Heart right ventricle (tissue), 16 donors: ENCODE measurements at regions of chr10 and their contacts with region 1.

Region 1: GRCh38 chr10:30186371-30186875 is 127.0 kb upstream of the JCAD start:
- DNase-seq: peak in 1 of 2 donors; percentile 24
- ATAC-seq: peak; percentile 19 to 70 (median 52)
- H3K4me3 ChIP-seq: peak overlapping the region in 5 of 10 donors; percentile 14 to 42 (median 31)
- H3K27ac ChIP-seq: peak overlapping the region; percentile 53 to 94 (median 83)
- H3K4me1 ChIP-seq: peaks cover 4 to 57% (median 21%) of the 10 kb centered on the region in 9 donors
- H3K27me3 ChIP-seq: no peaks in the 10 kb centered on the region
- CTCF ChIP-seq: peak in 7 of 9 donors; percentile 9 to 56 (median 29)

Region 2: DNA sequence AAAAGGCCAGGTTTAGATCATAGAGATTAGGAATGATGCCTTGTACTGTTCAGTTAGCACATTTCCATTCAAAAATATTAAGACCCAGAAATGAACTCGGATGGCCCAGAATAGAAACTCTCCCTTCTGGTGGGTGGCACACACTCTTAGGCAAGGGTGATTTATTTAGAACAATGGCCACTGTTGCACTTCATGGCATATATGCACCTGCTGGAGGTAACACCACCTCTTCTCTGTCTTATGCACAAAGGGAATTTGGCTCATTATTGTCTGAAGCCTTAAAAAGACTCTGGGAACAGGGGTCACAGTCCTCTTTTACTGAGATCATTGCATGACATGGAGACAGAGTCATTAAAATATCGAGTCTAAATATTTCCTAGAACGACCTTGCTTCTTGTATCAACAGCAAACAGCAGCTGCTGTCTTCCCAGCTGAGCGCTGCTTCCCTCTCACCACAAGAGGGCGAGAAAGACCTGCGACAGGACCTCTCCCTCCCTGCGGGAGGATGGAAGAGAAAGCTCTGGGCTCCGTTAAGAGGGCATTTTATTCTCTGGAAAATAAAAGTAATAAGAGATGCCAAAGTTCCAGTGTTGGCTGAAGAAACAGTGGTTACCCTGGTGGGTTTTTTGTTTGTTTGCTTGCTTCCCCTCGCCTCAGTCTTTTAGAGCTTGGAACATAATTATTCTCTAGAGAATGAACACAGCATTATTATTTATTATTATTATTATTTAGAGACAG is 1522.7 kb before region 1 on chr10:
- intact Hi-C with region 1: no loop called
- DNase-seq: peak; percentile 74 to 79
- ATAC-seq: peak; percentile 77 to 92 (median 90)
- H3K4me3 ChIP-seq: no peak overlapping the region
- H3K27ac ChIP-seq: no peak overlapping the region
- H3K4me1 ChIP-seq: peaks cover 0 to 14% (median 4%) of the 10 kb centered on the region in 9 donors
- H3K27me3 ChIP-seq: peaks cover 0 to 29% (median 4%) of the 10 kb centered on the region in 7 donors
- CTCF ChIP-seq: peak; percentile 93 to 98 (median 96)

Region 3: DNA sequence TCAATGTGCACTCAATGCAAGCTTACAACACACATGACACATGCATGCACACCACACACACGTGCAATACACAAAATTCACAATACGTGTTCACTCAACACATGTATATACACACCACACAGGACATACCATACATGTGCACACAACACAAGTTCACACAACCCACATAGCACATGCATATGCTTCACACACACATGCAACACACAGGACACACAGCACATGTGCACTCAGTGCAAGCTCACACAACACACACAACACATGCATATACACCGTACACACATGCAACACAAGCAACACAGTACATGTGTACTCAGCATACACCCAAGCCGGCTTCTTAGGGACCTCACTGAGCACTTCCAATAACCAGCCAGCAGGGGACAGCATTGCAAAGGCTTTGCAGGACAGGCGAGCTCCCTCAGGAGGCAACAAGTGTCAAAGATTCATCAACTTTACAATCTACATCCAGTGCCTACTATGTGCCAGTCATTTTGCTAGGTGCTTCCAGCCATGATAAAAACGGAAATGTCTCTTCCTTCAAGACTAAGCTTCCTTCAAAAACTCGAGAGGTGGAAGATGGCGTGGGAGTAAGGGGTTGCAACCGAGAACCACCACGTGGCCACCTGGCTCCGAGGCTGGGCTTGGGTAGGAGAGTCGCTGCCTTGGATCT is 188.1 kb before region 1 on chr10:
- intact Hi-C with region 1: loop called in 3 of 10 experiments (anchors 5 to 10 kb)
- DNase-seq: peak; percentile 62 to 80
- ATAC-seq: peak in 7 of 8 donors; percentile 45 to 70 (median 63)
- H3K4me3 ChIP-seq: no peak overlapping the region
- H3K27ac ChIP-seq: no peak overlapping the region
- H3K4me1 ChIP-seq: peaks cover 11 to 36% (median 29%) of the 10 kb centered on the region in 9 donors
- H3K27me3 ChIP-seq: peaks cover 0 to 11% (median 0%) of the 10 kb centered on the region in 7 donors
- CTCF ChIP-seq: peak; percentile 96 to 100 (median 99)

Region 4: GRCh38 chr10:30027057-30028005 is 159.1 kb before region 1 on chr10:
- intact Hi-C with region 1: loop called in 3 of 10 experiments (anchors 5 to 10 kb)
- DNase-seq: peak; percentile 43 to 57
- ATAC-seq: peak; percentile 50 to 80 (median 71)
- H3K4me3 ChIP-seq: peak overlapping the region in 3 of 10 donors; percentile 17 to 30 (median 24)
- H3K27ac ChIP-seq: peak overlapping the region; percentile 49 to 80 (median 68)
- H3K4me1 ChIP-seq: peaks cover 17 to 58% (median 44%) of the 10 kb centered on the region in 9 donors
- H3K27me3 ChIP-seq: peaks cover 0 to 15% (median 0%) of the 10 kb centered on the region in 7 donors
- CTCF ChIP-seq: peak in 2 of 9 donors; percentile 14 to 20

Region 5: DNA sequence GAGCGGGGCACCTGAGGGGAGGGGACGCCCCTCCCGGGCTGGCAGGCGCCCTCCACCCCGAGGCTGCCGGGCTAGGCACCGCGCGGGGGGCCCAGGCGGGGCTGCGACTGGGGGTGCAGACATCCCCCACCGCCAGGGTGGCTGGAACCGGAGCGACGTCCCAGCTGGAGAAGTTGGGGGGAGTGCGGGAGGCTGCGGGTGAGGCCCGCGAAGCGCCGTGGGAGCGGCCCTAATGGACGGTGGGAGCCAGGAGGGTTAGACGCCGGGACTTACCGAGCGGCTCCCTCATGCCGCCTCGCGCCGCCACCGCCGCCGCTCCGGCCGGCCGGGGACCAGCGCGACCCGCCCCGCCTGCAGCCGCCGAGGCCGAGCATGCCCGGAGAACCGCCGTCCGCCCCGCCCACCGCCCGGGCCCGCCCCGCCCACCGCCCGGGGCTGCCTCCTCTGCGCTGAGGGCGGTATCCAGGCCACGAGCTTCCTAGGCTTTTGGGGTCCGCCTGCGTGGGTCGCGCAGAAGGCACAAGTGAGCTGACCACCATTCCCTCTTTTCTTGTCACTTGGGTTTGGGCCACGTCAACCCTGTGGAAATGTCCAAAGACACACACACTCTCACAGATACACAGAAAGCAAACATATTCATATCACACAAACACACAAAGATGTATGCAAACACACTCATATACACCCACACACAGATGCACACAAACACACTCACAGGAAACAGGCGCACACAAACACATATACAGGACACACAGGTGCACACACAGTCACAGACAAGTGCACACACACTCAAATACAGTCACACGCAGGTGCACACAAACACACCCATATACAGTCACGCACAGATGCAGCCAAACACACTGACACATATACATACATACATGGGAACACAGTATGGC is 127.0 kb before region 1 on chr10 and contains the start of gene JCAD:
- intact Hi-C with region 1: loop called in 5 of 10 experiments (anchors 5 to 10 kb)
- DNase-seq: peak; percentile 80 to 85
- ATAC-seq: peak; percentile 76 to 94 (median 84)
- H3K4me3 ChIP-seq: peak within 1 kb of the TSS; percentile 68 to 90 (median 82)
- H3K27ac ChIP-seq: peak within 1 kb of the TSS; percentile 90 to 99 (median 95)
- H3K4me1 ChIP-seq: peaks cover 0 to 69% (median 40%) of the 10 kb centered on the region in 9 donors
- H3K27me3 ChIP-seq: peaks cover 0 to 61% (median 7%) of the 10 kb centered on the region in 7 donors
- CTCF ChIP-seq: no peak
- total RNA-seq, gene JCAD: 16.5 to 39.8 (median 21.4) TPM

Region 6: DNA sequence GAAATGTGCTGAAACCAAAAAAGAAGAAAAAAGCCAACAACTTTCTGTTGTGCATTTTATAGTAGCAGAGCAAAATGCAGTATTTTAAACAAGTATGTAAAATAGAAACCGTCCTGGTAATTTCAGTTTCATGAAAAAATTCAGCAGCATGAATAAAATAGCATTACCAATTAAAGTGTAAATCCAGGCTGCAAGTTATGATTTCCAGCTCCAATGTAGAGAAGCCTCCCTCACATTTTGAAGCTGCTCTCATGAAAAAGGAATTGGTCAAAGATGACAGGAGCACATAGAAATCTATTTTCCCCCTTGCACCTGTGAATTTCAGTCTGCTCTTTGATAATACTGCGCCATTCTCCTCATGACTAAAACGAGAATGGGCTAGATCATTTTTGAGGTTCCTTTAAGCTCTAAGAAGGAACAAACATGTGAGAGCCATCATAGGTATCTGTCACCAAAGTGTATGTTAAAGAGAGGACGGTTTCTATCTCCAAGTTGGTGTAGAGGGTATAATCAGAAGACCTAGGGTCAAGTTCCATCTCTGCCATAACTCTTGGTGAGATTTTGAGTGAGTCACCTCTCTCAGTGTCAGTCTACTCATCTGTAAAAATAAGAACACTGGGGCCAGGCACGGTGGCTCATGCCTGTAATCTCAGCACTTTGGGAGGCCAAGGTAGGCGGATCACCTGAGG is 55.1 kb after region 1 on chr10:
- intact Hi-C with region 1: loop called in 2 of 10 experiments (anchors 2 to 5 kb)
- DNase-seq: no peak
- ATAC-seq: no peak
- H3K4me3 ChIP-seq: no peak overlapping the region
- H3K27ac ChIP-seq: no peak overlapping the region
- H3K4me1 ChIP-seq: peaks cover 0 to 24% (median 4%) of the 10 kb centered on the region in 9 donors
- H3K27me3 ChIP-seq: no peaks in the 10 kb centered on the region
- CTCF ChIP-seq: no peak